Activated naive CD4-positive, alpha-beta T cell treated with anti-CD3 and anti-CD28 coated beads for 36 hours (primary cell): ENCODE measurements at regions of chr15 and their contacts with region 1.

Region 1: GRCh38 chr15:92077353-92078085 is 224.0 kb downstream of the SLCO3A1 start:
- DNase-seq: peak; percentile 90
- H3K4me3 Mint-ChIP-seq: no peak overlapping the region
- H3K27ac Mint-ChIP-seq: no peak overlapping the region
- H3K4me1 Mint-ChIP-seq: peaks cover 27% of the 10 kb centered on the region
- H3K27me3 Mint-ChIP-seq: no peaks in the 10 kb centered on the region

Region 2: DNA sequence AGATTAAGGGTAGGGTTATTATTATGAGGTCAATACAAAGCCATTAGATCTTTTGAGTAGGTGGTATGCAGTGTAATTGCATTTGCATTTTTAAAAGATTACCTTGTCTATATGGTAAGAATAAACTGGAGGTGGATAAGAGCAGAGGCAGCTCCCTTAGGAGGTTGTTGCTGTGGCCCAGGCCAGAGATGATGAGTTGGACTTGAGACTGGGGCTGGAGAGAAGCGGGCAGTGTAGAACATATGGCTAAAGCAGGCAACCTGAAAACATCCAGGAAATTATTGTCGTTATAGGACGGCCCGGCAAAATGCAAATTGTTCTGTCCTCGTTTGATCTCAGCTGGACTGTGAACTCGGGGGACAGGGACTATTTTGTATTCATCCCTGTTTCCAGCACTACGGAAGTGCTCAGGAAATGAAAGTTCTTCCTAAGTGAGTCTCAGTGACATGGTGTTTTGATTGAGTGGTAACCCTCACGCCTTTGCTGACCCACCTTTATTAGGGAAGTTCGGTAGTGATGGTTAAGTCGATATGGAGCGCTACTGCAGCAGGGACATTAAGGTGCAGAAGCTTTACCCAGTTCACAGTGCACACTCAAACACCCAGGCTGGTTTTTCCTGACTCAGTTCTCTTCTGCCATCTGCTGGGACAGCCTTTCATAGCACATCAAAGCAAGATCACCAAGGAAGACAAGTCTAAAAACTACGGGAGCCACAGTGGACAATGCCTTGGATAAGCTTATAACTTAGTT is 1028.0 kb before region 1 on chr15:
- CTCF ChIA-PET with region 1: no interaction called
- intact Hi-C with region 1: loop called (anchors 10 kb)
- DNase-seq: peak; percentile 83
- H3K4me3 Mint-ChIP-seq: no peak overlapping the region
- H3K27ac Mint-ChIP-seq: no peak overlapping the region
- H3K4me1 Mint-ChIP-seq: peaks cover 19% of the 10 kb centered on the region
- H3K27me3 Mint-ChIP-seq: no peaks in the 10 kb centered on the region

Region 3: DNA sequence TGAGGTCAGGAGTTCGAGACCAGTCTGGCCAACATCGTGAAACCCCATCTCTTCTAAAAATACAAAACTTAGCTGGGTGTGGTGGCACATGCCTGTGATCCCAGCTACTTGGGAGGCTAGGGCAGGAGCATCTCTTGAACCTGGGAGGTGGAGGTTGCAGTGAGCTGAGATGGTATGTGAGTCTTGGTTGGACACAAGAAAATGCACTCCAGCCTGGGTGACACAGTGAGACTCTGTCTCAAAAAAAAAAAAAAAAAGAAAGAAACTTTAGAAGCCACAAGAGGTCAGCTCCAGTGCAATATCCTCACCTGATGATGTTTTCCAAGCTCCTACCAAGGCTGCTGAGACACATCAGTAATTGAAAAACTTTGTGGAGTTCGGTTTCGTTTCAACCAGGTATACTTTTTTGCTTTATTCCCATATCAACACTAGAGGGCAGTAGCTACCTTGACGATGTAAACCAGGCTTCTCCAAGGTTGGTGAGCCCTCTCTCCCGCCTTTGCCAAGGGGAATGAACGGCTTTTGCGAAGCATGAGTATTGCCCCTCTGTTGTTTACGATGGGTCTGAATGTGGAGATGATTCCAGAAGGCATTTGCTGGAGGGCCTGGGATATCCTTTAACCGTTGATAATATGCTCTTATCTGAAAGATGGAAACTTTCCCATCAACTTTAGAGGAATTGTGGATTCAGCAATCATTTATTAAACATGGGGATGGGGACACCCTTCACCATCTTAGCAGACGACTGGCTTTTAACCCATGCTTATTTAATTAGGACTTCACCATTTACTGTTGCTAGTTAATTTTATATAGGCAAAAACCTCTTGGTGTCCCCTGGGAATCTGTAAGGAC is 774.7 kb before region 1 on chr15:
- CTCF ChIA-PET with region 1: interaction called, 27 read pairs
- intact Hi-C with region 1: loop called (anchors 1 kb)
- DNase-seq: peak; percentile 29
- H3K4me3 Mint-ChIP-seq: no peak overlapping the region
- H3K27ac Mint-ChIP-seq: no peak overlapping the region
- H3K4me1 Mint-ChIP-seq: peaks cover 31% of the 10 kb centered on the region
- H3K27me3 Mint-ChIP-seq: no peaks in the 10 kb centered on the region

Region 4: DNA sequence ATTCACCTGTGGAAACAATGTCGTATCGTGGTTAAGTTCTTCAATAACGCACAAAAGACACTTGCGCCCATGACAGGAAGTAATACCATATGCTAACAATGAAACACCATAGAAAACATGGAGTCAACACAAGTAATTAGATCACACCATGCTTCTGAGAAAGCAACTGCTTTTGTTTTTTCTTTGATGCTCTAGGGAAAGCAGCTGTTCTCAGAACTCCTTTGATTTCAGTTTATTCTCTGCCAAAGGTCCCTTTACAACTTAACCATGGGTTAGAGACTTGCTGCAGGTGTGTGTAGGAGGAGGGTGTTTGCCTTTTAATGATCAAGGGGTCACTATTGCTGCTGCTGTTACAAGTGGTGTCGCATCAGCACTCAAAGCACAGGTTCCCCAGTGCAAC is 548.0 kb before region 1 on chr15:
- CTCF ChIA-PET with region 1: no interaction called
- intact Hi-C with region 1: loop called (anchors 5 kb)
- DNase-seq: no peak
- H3K4me3 Mint-ChIP-seq: no peak overlapping the region
- H3K27ac Mint-ChIP-seq: no peak overlapping the region
- H3K4me1 Mint-ChIP-seq: peaks cover 13% of the 10 kb centered on the region
- H3K27me3 Mint-ChIP-seq: no peaks in the 10 kb centered on the region

Region 5: GRCh38 chr15:91885714-91886270 is 191.7 kb before region 1 on chr15:
- CTCF ChIA-PET with region 1: interaction called, 12 read pairs
- intact Hi-C with region 1: loop called (anchors 1 kb)
- DNase-seq: peak; percentile 44
- H3K4me3 Mint-ChIP-seq: no peak overlapping the region
- H3K27ac Mint-ChIP-seq: no peak overlapping the region
- H3K4me1 Mint-ChIP-seq: peaks cover 10% of the 10 kb centered on the region
- H3K27me3 Mint-ChIP-seq: no peaks in the 10 kb centered on the region

Region 6: DNA sequence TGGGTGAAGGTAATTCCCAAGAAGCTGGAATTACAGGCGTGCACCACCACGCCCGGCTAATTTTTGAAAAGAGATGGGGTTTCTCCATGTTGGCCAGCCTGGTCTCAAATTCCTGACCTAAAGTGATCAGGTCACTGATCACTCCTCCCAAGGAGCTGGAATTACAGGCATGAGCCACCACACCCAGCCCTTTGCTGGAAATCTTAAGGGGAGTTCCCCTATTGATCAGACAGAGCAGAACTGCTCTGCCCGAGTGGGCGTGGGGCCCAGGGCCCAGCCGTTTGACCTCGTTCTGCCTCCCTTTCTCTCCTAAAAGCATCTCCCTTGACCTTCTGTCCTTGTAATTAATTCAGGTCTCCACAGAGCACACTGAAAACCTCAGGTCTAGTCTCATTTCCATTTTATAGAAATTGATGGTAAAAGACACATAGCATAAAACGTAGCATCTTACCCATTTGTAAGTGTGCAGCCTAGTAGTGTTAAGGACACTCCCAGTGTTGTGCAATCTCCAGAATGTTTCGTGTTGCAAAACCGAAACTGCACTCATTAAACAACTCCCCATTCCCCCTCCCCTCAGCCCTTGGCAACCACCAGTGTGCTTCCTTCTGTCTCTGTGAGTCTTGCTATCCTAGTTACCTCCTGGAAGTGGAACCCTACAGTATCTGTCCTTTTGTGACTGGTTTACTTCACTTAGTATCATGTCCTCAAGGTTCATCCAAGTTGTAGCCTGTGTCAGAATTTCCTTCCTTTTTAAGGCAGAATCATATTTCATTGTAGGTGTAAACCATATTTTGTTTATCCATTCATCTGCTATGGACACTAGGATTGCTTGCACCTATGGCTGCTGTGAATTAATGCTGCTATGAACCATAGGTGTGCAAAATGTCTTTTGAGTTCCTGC is 134.6 kb before region 1 on chr15:
- CTCF ChIA-PET with region 1: interaction called, 5 read pairs
- intact Hi-C with region 1: loop called (anchors 2 kb)
- DNase-seq: peak; percentile 64
- H3K4me3 Mint-ChIP-seq: no peak overlapping the region
- H3K27ac Mint-ChIP-seq: no peak overlapping the region
- H3K4me1 Mint-ChIP-seq: peaks cover 37% of the 10 kb centered on the region
- H3K27me3 Mint-ChIP-seq: no peaks in the 10 kb centered on the region

Region 7: GRCh38 chr15:92091155-92091734 is 13.7 kb after region 1 on chr15:
- CTCF ChIA-PET with region 1: interaction called, 16 read pairs
- intact Hi-C with region 1: no loop called
- DNase-seq: peak; percentile 42
- H3K4me3 Mint-ChIP-seq: no peak overlapping the region
- H3K27ac Mint-ChIP-seq: no peak overlapping the region
- H3K4me1 Mint-ChIP-seq: peaks cover 22% of the 10 kb centered on the region
- H3K27me3 Mint-ChIP-seq: no peaks in the 10 kb centered on the region

Region 8: DNA sequence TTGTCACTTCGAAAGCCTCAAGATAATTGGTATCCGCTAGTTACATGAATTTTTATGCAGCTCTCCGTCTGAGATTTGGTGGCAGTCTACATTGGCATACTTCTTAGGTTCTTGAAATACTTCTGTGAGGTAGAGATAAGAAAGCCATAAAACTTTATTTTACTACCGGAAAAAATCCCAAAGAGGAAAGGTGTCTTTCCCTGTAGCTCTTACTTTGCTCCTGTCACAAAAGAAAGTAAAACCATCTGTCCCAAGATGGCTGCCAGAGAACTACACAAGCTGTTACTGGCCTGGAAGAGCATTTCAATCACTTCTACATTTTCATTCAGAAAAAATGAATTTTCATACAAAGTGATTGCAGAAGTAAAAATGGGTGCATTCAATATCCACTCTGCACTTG is 101.4 kb after region 1 on chr15:
- CTCF ChIA-PET with region 1: no interaction called
- intact Hi-C with region 1: no loop called
- DNase-seq: no peak
- H3K4me3 Mint-ChIP-seq: no peak overlapping the region
- H3K27ac Mint-ChIP-seq: no peak overlapping the region
- H3K4me1 Mint-ChIP-seq: no peaks in the 10 kb centered on the region
- H3K27me3 Mint-ChIP-seq: peaks cover 9% of the 10 kb centered on the region